H1 (cell line): ENCODE measurements at regions of chr3 and their contacts with region 1.

Region 1: GRCh38 chr3:139935016-139935865 is at the start of gene CLSTN2:
- DNase-seq: no peak
- H3K4me3 ChIP-seq: peak within 1 kb of the TSS; percentile 49 to 83 (median 56)
- H3K27ac ChIP-seq: no peak within 1 kb of the TSS
- H3K4me1 ChIP-seq: peaks cover 3 to 7% (median 5%) of the 10 kb centered on the region in 4 experiments; a peak in 5 of 7 replicates
- H3K27me3 ChIP-seq: peaks cover 14 to 30% (median 24%) of the 10 kb centered on the region in 4 experiments
- CTCF ChIP-seq: 0 out of 4 replicates have a peak, but pooled peaks of 1 of the 3 experiments have one; percentile 0
- EP300 ChIP-seq: no peak
- POLR2A ChIP-seq: no peak
- RAD21 ChIP-seq: no peak; a peak in 1 of 4 replicates
- total RNA-seq, gene CLSTN2: 0.31 and 0.52 TPM in 2 replicates

Region 2: DNA sequence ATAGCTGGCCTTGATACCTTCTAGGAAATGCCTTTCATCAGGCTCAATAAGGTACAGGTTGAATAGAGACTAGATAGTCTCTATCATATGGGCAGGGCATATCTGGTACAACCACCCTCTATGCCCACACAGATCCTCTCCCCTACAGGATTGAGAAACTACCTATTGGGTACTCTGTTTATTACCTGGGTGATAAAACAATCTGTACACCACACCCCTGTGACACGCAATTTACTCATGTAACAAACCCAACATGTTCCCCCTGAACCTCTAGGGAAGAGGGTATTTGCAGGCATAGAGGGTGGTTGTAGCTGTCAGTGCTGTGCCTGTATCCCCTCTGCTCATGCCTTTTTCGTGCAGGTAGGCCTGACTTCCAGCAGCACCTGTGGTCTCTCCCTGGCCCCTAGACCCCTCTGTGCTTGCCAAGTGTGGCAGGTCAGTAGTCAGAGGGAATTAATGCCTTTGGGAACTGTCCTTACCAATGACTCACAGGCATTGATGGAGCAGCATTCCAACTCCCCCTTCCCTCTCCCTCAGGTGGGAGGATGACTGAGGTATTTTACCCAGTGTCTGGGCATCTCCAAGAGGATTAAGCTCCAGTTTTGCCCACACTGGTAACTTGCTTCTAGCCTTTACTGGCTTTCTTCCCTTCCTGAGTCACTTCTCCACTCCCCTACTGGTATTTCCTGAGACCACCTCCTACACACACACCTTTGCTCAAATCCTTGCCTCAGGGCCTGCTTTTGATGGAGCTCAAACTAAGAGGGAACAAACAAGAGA is 18.1 kb after region 1 on chr3:
- CTCF ChIA-PET with region 1: interaction called, 26 read pairs
- POLR2A ChIA-PET with region 1: no interaction called
- DNase-seq: no peak
- H3K4me3 ChIP-seq: no peak overlapping the region
- H3K27ac ChIP-seq: no peak overlapping the region
- H3K4me1 ChIP-seq: 0 out of 7 replicates have a peak, but pooled peaks cover 0 to 3% (median 1%) of the 10 kb centered on the region in 4 experiments
- H3K27me3 ChIP-seq: no peaks in the 10 kb centered on the region
- CTCF ChIP-seq: no peak
- EP300 ChIP-seq: no peak
- POLR2A ChIP-seq: no peak
- RAD21 ChIP-seq: no peak

Region 3: GRCh38 chr3:139970526-139970925 is 35.3 kb after region 1 on chr3:
- CTCF ChIA-PET with region 1: interaction called, 10 read pairs
- POLR2A ChIA-PET with region 1: no interaction called
- DNase-seq: no peak
- H3K4me3 ChIP-seq: no peak overlapping the region
- H3K27ac ChIP-seq: no peak overlapping the region
- H3K4me1 ChIP-seq: no peaks in the 10 kb centered on the region
- H3K27me3 ChIP-seq: no peaks in the 10 kb centered on the region
- CTCF ChIP-seq: no peak
- EP300 ChIP-seq: no peak
- POLR2A ChIP-seq: no peak
- RAD21 ChIP-seq: no peak

Region 4: DNA sequence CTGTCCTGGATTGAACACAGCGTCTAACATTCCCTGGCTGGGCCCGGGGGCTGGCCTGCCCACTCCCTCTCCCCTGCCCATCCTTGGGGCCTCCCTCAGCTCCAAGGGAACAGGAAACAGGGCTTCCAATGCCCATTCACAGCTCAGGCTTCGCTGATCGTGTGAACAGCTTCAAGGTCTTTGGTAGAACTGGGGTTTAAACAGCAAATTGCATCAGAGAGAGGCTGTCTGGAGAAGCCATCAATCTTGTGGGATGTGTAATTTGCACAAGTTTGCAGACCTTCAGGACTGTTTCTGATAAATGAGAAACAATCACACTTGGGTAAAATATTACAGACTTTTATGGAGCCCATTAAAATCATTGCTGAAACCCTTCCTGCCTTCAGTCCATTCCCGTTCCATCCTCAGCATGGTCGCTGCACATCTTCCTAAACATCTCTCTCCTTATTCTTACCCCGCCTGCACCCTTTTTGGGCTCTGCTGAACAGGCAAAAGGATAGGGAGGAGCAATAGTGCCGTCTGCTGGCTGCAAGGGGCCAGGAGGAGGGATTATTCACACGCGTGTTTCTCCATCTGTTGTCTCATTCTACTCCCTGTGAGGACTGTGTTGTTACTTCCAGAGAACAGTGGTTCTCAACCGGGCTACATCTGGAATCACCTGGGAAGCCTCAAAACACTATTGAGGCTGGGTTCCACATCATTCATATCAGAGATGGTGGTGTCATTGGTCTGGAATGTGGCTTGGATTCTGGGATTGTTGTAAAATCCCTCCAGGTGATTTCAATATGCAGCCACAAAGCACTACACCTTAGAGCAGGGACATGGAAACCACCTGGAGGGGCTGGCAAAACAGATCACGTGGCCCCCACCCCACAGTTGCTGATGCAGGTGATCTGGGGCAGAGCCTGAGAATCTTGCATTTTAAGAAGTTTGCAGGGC is 116.0 kb after region 1 on chr3:
- CTCF ChIA-PET with region 1: interaction called, 60 read pairs
- POLR2A ChIA-PET with region 1: no interaction called
- DNase-seq: peak; percentile 21 to 57
- H3K4me3 ChIP-seq: no peak overlapping the region
- H3K27ac ChIP-seq: no peak overlapping the region; the same call in 1 of the 2 replicates
- H3K4me1 ChIP-seq: no peaks in the 10 kb centered on the region; a peak in 1 of 7 replicates
- H3K27me3 ChIP-seq: no peaks in the 10 kb centered on the region
- CTCF ChIP-seq: peak; percentile 72 to 73 (median 72)
- EP300 ChIP-seq: no peak
- POLR2A ChIP-seq: no peak
- RAD21 ChIP-seq: peak; percentile 81 to 88